Heart right ventricle (tissue), 16 donors: ENCODE measurements at regions of chr19 and their contacts with region 1.

Region 1: DNA sequence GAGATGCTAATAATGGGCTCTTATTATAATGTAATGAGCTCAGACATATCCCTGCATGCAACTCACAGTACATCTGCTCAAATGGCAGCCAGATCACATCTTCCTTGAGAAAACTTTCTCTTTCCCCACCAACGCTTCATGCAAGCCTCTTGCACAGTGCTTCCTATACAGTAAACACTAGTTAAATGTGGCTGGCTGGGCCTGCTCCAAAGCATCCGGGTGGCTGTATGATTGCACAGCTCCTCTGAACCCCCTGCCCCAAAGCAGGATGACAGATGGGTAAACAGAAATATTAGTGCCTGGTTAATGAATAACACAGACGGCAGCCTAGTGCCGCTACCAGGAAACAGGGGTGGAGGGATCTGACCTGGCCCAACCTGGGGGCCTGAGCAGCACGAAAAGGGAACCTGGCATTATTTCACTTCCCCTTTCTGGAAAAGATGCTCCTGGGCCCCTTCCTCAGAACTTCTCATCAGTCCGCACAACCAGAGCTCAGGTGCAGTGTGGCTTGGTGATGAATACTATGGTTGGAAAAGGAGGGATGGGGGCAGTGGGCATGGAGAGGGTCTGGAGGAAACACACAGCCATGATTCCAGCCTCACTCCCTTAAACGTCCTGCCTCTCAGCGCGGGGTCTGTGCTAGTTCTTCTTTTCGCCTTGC is 10.8 kb downstream of the FFAR2 start:
- DNase-seq: no peak
- ATAC-seq: peak; percentile 18 to 45 (median 30)
- H3K4me3 ChIP-seq: no peak overlapping the region
- H3K27ac ChIP-seq: peak overlapping the region in 6 of 10 donors; percentile 27 to 78 (median 65)
- H3K4me1 ChIP-seq: peaks cover 0 to 73% (median 39%) of the 10 kb centered on the region in 9 donors
- H3K27me3 ChIP-seq: no peaks in the 10 kb centered on the region
- CTCF ChIP-seq: no peak

Region 2: GRCh38 chr19:35404879-35405622 is 53.8 kb before region 1 on chr19:
- intact Hi-C with region 1: loop called in 1 of 10 experiments (anchors 5 kb)
- DNase-seq: no peak
- ATAC-seq: peak in 1 of 8 donors; percentile 71
- H3K4me3 ChIP-seq: no peak overlapping the region
- H3K27ac ChIP-seq: no peak overlapping the region
- H3K4me1 ChIP-seq: peaks cover 0 to 7% (median 0%) of the 10 kb centered on the region in 9 donors
- H3K27me3 ChIP-seq: peaks cover 0 to 9% (median 0%) of the 10 kb centered on the region in 7 donors
- CTCF ChIP-seq: no peak

Region 3: GRCh38 chr19:35430409-35431144 is 28.3 kb before region 1 on chr19:
- intact Hi-C with region 1: no loop called
- DNase-seq: no peak
- ATAC-seq: no peak
- H3K4me3 ChIP-seq: no peak overlapping the region
- H3K27ac ChIP-seq: peak overlapping the region in 2 of 10 donors; percentile 16 to 79
- H3K4me1 ChIP-seq: peaks cover 0 to 58% (median 16%) of the 10 kb centered on the region in 9 donors
- H3K27me3 ChIP-seq: no peaks in the 10 kb centered on the region
- CTCF ChIP-seq: no peak

Region 4: GRCh38 chr19:35612559-35613321 is 153.9 kb after region 1 on chr19 and contains the start of gene HAUS5:
- intact Hi-C with region 1: no loop called
- DNase-seq: peak; percentile 91 to 94
- ATAC-seq: peak; percentile 97 to 100 (median 99)
- H3K4me3 ChIP-seq: peak within 1 kb of the TSS; percentile 59 to 95 (median 72)
- H3K27ac ChIP-seq: peak within 1 kb of the TSS in 8 of 10 donors; percentile 57 to 87 (median 64)
- H3K4me1 ChIP-seq: peaks cover 4 to 24% (median 12%) of the 10 kb centered on the region in 9 donors
- H3K27me3 ChIP-seq: no peaks in the 10 kb centered on the region
- CTCF ChIP-seq: peak in 2 of 9 donors; percentile 17
- total RNA-seq, gene HAUS5: 3.2 to 9.3 (median 4.7) TPM